BJ (cell line): ENCODE measurements at regions of chr11 and their contacts with region 1.

Region 1: DNA sequence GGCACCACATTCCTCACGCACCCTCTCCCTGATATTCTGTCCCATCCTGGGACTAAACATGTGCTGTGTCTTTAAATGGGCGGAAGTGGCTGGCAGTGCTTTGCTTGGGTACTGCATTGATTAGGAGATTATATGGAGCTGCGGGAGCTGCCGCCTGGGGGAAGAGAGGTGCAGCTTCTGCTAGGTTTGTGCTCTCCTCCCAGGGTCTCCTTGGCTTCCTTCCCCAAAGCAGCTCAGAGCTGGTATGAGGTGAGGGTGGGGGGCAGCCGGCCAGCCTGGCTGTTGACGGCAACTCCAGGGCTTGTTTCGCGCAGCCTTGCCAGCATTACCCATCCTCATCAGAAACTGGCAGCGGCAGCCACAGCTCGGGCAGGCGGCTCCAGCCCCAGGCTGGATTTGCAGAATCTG is 95.4 kb downstream of the GRAMD1B start:
- DNase-seq: no peak
- H3K4me3 ChIP-seq: peak overlapping the region; percentile 32
- H3K27me3 ChIP-seq: no peaks in the 10 kb centered on the region
- CTCF ChIP-seq: no peak

Region 2: DNA sequence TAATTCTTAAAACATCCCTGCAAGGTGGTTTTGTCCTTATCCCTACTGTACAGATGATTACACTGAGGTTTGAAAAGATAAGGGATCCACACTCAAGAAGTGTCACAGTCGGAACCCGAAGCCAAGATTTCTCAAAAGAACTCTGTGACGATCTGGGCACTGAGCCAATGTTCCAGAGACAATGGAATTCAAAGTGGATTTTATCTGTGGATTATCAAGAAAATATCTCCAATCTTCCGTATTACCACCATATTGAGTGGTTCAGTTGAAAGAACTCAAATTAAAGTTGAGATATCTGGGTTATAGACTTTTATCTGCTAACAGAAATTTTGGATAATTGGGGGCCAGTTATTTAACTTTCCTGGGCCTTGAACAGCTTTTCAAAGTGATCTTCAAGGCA is 195.4 kb before region 1 on chr11:
- CTCF ChIA-PET with region 1: no interaction called
- POLR2A ChIA-PET with region 1: interaction called, 12 read pairs
- DNase-seq: no peak
- H3K4me3 ChIP-seq: no peak overlapping the region
- H3K27me3 ChIP-seq: peaks cover 2% of the 10 kb centered on the region
- CTCF ChIP-seq: no peak